A549 (cell line): ENCODE measurements at regions of chr2 and their contacts with region 1.

Region 1: DNA sequence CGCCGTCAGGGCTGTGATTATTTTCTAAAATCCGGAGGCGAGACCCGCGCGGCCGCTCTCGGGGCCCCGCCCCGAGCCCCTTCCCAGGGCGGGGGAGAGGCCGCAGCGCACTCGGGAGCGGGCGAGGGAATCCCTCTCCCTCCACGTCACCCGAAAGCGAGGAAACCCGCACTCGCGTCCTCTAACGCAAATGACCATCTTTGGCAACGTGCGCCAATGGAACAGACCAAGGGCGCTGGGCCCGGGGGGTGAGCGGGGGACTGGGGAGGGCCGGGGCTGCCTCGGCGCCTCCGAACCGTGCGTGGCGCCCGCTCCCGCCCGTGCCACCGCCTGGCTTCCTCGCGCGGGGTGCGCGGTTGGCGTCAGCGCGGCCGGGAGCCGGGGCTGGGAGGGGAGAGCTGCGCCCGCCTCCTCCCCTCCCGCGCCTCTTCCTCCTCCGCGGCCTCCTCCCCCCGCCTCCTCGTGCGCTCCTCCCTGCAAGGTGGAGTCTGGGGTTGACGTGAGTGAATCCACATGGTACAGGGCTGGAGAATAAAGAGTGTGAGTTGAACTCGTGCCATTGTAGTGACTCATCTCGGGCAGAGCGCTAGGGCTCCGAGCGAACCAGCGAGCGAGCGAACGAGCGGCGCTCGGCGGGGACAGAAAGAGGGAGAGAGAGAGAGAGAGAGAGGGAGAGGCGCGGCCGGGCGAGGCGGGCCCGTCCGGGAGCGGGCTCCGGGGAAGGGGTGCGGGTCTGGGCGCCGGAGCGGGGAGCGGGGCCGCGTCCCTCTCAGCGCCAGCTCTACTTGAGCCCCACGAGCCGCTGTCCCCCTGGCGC is at the start of gene FOSL2:
- DNase-seq: peak; percentile 98 to 100
- ATAC-seq: peak; percentile 49 to 76
- H3K4me3 ChIP-seq: peak within 1 kb of the TSS; percentile 78
- H3K27ac ChIP-seq: peak within 1 kb of the TSS; percentile 95
- H3K4me1 ChIP-seq: peaks cover 21% of the 10 kb centered on the region
- CTCF ChIP-seq: no peak; the same call in 2 of the 3 replicates
- EP300 ChIP-seq: peak; percentile 38 to 68; a peak in 2 of 5 replicates
- POLR2A ChIP-seq: peak; percentile 74
- RAD21 ChIP-seq: peak; percentile 46; a peak in 4 of 5 replicates
- polyA plus RNA-seq, gene FOSL2: 45.7 and 50.6 TPM in 2 replicates

Region 2: GRCh38 chr2:27723372-27724144 is 668.9 kb before region 1 on chr2:
- CTCF ChIA-PET with region 1: interaction called, 12 read pairs
- POLR2A ChIA-PET with region 1: interaction called, 7 read pairs
- DNase-seq: peak; percentile 83 to 92
- ATAC-seq: peak; percentile 51 to 77
- H3K4me3 ChIP-seq: no peak overlapping the region
- H3K27ac ChIP-seq: peak overlapping the region; percentile 93 to 98
- H3K4me1 ChIP-seq: peaks cover 65% of the 10 kb centered on the region
- CTCF ChIP-seq: peak; percentile 78
- EP300 ChIP-seq: peak; percentile 36 to 62; a peak in 2 of 5 replicates
- POLR2A ChIP-seq: no peak
- RAD21 ChIP-seq: peak; percentile 82 to 86

Region 3: DNA sequence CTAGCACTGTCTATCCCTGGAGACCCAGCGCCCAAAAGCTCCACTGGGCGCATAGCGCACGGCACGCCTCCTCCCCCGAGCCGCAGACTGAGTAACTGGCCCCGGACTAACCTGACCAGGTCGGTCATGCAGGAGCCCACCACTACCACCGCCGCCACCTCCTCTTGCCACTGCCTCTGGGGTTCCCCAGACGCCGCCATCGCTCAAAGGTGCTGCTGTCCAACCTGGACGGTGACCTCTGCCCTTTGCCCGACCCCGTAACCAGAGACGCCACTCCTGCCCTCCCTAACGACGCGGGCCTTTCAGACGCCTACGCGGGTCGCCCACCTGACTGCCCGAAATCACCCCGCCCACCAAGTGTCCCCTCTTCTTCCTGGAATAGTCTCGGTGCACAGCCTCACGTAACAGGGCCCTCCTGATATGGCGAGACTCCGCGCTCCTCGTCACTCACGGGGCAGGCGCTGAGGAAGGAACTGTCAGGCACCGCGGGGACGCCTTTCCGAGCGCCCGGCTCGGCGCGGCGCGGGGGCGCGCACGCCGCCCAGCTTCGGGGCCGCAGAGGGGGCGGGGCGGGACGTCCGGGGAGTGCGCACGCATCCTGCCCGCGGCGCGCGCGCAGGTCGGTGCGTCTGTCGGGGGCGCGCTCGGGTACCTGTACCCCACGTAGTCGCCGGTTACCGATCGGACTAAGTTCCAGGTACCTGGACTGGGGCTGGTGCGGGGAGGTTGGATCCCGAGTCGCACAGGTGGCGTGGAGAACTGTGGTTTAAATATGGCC is 502.2 kb before region 1 on chr2 and contains the starts of genes BABAM2 and RBKS:
- CTCF ChIA-PET with region 1: no interaction called
- POLR2A ChIA-PET with region 1: interaction called, 15 read pairs
- DNase-seq: peak; percentile 88 to 91
- ATAC-seq: peak; percentile 92 to 93
- H3K4me3 ChIP-seq: peak within 1 kb of the TSS; percentile 85
- H3K27ac ChIP-seq: peak within 1 kb of the TSS; percentile 94 to 97
- H3K4me1 ChIP-seq: peaks cover 60% of the 10 kb centered on the region
- CTCF ChIP-seq: no peak
- EP300 ChIP-seq: peak in 1 of 2 experiments; percentile 8; a peak in 1 of 5 replicates
- POLR2A ChIP-seq: peak; percentile 84
- RAD21 ChIP-seq: peak in 1 of 2 experiments; percentile 31; a peak in 2 of 5 replicates
- polyA plus RNA-seq, gene BABAM2: 78.4 and 87.1 TPM in 2 replicates
- polyA plus RNA-seq, gene RBKS: 7.4 and 8.5 TPM in 2 replicates

Region 4: GRCh38 chr2:28201671-28202180 is 190.8 kb before region 1 on chr2:
- CTCF ChIA-PET with region 1: no interaction called
- POLR2A ChIA-PET with region 1: no interaction called
- DNase-seq: no peak
- ATAC-seq: no peak
- H3K4me3 ChIP-seq: no peak overlapping the region
- H3K27ac ChIP-seq: 0 out of 6 replicates have a peak overlapping the region, but pooled peaks of 1 of the 2 experiments have one; percentile 18
- H3K4me1 ChIP-seq: no peaks in the 10 kb centered on the region
- CTCF ChIP-seq: no peak
- EP300 ChIP-seq: no peak
- POLR2A ChIP-seq: no peak
- RAD21 ChIP-seq: no peak

Region 5: DNA sequence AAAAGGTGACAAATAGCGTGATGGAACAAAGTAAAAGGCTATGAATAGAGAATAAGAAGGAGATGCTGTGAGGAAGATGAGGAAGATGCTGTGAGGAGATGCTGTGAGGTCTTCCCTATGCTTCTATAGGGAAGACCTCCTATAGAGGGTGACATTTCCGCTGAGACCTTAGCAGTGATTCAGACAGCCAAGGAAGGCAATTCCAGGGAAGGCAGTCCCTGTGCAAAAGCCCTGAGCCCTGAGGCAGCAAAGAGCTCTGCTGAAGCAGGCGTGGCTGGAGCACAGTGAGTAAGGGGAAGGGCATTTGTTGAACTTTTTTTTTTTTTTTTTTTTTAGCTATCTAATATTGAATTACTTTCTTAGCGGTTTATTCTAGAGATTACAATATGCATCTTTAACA is 142.5 kb before region 1 on chr2:
- CTCF ChIA-PET with region 1: interaction called, 4 read pairs
- POLR2A ChIA-PET with region 1: interaction called, 10 read pairs
- DNase-seq: peak; percentile 69 to 80
- ATAC-seq: peak; percentile 98 to 99
- H3K4me3 ChIP-seq: no peak overlapping the region
- H3K27ac ChIP-seq: peak overlapping the region; percentile 15 to 70; a peak in 4 of 6 replicates
- H3K4me1 ChIP-seq: peaks cover 27% of the 10 kb centered on the region
- CTCF ChIP-seq: no peak
- EP300 ChIP-seq: no peak
- POLR2A ChIP-seq: no peak
- RAD21 ChIP-seq: peak in 1 of 2 experiments; percentile 20; a peak in 2 of 5 replicates

Region 6: GRCh38 chr2:28276076-28276618 is 116.4 kb before region 1 on chr2:
- CTCF ChIA-PET with region 1: interaction called, 4 read pairs
- POLR2A ChIA-PET with region 1: interaction called, 56 read pairs
- DNase-seq: peak; percentile 91 to 92
- ATAC-seq: peak; percentile 87 to 91
- H3K4me3 ChIP-seq: no peak overlapping the region
- H3K27ac ChIP-seq: peak overlapping the region; percentile 90 to 93
- H3K4me1 ChIP-seq: peaks cover 62% of the 10 kb centered on the region
- CTCF ChIP-seq: no peak
- EP300 ChIP-seq: peak; percentile 73 to 83; a peak in 2 of 5 replicates
- POLR2A ChIP-seq: no peak
- RAD21 ChIP-seq: peak; percentile 35 to 60; a peak in 4 of 5 replicates